Heart right ventricle (tissue), 16 donors: ENCODE measurements at regions of chr7 and their contacts with region 1.

Region 1: DNA sequence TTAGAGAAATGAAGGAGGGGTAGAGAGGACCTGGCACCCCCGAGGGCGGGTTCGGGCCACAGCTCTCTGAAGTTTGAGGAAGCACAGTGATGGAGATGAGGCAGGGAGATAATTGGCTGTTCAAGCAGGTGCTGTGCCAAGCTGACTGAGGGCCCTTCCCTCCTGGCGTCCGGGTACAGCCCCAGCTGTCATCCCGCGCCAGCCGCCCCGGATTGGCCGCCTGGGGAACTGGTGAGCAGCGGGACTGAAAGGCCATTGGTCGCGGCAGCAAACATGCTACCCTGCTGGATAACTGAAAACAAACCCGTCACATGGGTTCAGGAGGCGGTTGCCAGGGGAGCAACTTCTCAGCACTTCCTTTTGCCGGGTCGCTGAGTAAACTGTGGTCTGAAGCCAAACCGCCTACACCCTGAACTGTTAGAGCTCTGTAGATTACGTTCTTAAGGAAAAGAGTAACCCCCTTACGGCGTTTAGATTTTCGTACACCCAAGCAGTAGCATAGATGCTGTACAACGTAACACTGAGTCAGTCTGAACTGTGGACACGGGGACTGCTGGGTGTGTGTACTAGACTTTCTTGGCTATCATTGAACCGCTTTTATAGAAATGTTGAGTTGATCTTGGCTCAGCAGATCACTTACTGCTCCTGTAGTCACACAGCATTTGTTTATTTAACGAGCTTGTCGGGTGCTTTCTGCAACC is 1.3 kb downstream of the INSIG1 start:
- DNase-seq: peak; percentile 92 to 94
- ATAC-seq: peak; percentile 72 to 93 (median 90)
- H3K4me3 ChIP-seq: peak overlapping the region; percentile 75 to 97 (median 91)
- H3K27ac ChIP-seq: peak overlapping the region; percentile 48 to 96 (median 94)
- H3K4me1 ChIP-seq: peaks cover 12 to 52% (median 36%) of the 10 kb centered on the region in 9 donors
- H3K27me3 ChIP-seq: no peaks in the 10 kb centered on the region
- CTCF ChIP-seq: peak in 3 of 9 donors; percentile 12 to 26 (median 23)

Region 2: DNA sequence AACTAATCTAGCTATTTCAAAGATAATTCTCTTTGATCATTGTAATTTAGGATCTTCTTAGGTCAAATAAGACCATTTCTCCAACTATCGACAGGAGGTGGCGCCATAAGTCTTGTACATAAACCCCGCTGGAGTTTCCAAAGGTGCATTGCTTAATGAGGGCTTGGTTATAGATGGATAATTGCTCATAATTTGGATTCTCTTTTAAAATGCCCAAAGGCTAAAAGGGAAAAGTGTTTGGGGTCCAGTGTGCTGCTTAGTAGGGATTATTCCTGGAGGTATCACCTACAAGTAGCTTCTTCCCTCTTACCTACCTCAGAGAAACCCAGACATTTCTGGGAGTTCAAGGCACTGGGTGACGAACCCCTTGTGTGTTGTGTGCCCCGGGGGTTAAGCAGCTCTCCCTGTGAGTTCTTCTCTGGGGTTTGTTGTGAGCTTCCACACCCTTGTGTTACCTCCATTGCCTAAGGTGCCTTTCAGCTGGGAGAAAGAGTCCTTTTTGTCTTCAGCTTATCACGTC is 371.3 kb before region 1 on chr7:
- intact Hi-C with region 1: loop called in 2 of 10 experiments (anchors 5 kb)
- DNase-seq: peak in 1 of 2 donors; percentile 84
- ATAC-seq: peak; percentile 60 to 92 (median 84)
- H3K4me3 ChIP-seq: peak overlapping the region; percentile 42 to 76 (median 64)
- H3K27ac ChIP-seq: peak overlapping the region in 9 of 10 donors; percentile 76 to 92 (median 82)
- H3K4me1 ChIP-seq: peaks cover 0 to 23% (median 11%) of the 10 kb centered on the region in 9 donors
- H3K27me3 ChIP-seq: peaks cover 0 to 1% (median 0%) of the 10 kb centered on the region in 7 donors
- CTCF ChIP-seq: peak; percentile 28 to 83 (median 72)

Region 3: GRCh38 chr7:155003376-155004214 is 295.4 kb before region 1 on chr7:
- intact Hi-C with region 1: loop called in 5 of 10 experiments (anchors 5 kb)
- DNase-seq: peak; percentile 72 to 80
- ATAC-seq: peak; percentile 97 to 99 (median 98)
- H3K4me3 ChIP-seq: peak overlapping the region; percentile 72 to 100 (median 95)
- H3K27ac ChIP-seq: peak overlapping the region; percentile 76 to 97 (median 93)
- H3K4me1 ChIP-seq: peaks cover 2 to 28% (median 16%) of the 10 kb centered on the region in 9 donors
- H3K27me3 ChIP-seq: no peaks in the 10 kb centered on the region
- CTCF ChIP-seq: no peak

Region 4: GRCh38 chr7:155190688-155191087 is 108.3 kb before region 1 on chr7:
- intact Hi-C with region 1: loop called in 2 of 10 experiments (anchors 5 to 10 kb)
- DNase-seq: peak; percentile 35 to 59
- ATAC-seq: peak in 7 of 8 donors; percentile 63 to 81 (median 67)
- H3K4me3 ChIP-seq: peak overlapping the region in 3 of 10 donors; percentile 5 to 18 (median 15)
- H3K27ac ChIP-seq: no peak overlapping the region
- H3K4me1 ChIP-seq: peaks cover 0 to 4% (median 2%) of the 10 kb centered on the region in 9 donors
- H3K27me3 ChIP-seq: peaks cover 0 to 42% (median 13%) of the 10 kb centered on the region in 7 donors
- CTCF ChIP-seq: peak; percentile 77 to 88 (median 83)

Region 5: DNA sequence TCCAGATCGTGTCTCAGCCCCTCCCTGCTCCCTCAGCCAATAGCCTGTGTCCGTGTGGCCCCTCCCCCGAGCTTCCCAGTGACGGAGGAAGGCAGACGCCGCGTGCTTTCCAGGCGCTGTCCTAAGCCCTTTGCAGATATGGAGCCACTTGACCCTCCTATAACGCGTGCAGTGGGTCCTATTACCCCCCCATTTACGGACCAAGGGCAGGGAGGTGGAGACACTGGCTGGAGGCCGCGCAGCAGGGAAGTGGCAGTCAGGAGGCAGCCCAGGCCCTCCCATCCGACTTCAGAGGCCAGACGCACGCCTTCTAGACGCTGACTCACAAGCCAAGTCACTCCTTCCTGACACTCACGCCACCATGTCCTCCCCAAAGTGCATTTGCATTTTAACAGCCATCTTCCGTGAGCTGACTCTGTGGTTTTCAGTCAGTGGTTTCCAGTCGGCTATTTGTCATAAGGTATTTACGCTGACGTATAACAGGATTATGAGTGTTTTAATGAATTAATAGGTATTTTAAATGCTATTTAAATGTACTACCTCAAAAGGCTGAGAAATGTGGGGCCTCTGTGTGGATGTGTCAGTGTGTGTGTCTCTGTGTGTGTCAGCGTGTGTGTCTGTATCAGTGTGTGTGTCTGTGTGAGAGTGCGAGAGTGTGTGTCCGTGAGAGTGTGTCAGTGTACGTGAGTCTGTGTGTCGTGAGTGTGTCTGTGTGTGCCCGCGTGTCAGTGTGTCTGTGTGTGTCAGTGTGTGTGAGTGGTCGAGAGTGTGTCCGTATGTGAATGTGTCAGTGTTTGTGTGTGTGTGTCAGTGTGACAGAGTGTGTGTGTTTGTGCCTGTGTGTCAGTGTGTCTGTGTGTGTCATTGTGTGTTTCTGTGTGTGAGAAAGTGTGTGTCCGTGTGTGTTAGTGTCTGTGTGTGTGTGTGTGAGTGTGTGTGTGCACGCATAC is 93.3 kb before region 1 on chr7:
- intact Hi-C with region 1: loop called in 7 of 10 experiments (anchors 2 to 5 kb)
- DNase-seq: peak; percentile 81 to 86
- ATAC-seq: peak; percentile 84 to 91 (median 88)
- H3K4me3 ChIP-seq: peak overlapping the region in 9 of 10 donors; percentile 12 to 54 (median 39)
- H3K27ac ChIP-seq: peak overlapping the region; percentile 59 to 94 (median 84)
- H3K4me1 ChIP-seq: peaks cover 0 to 28% (median 11%) of the 10 kb centered on the region in 9 donors
- H3K27me3 ChIP-seq: peaks cover 0 to 25% (median 3%) of the 10 kb centered on the region in 7 donors
- CTCF ChIP-seq: peak in 2 of 9 donors; percentile 9 to 18

Region 6: DNA sequence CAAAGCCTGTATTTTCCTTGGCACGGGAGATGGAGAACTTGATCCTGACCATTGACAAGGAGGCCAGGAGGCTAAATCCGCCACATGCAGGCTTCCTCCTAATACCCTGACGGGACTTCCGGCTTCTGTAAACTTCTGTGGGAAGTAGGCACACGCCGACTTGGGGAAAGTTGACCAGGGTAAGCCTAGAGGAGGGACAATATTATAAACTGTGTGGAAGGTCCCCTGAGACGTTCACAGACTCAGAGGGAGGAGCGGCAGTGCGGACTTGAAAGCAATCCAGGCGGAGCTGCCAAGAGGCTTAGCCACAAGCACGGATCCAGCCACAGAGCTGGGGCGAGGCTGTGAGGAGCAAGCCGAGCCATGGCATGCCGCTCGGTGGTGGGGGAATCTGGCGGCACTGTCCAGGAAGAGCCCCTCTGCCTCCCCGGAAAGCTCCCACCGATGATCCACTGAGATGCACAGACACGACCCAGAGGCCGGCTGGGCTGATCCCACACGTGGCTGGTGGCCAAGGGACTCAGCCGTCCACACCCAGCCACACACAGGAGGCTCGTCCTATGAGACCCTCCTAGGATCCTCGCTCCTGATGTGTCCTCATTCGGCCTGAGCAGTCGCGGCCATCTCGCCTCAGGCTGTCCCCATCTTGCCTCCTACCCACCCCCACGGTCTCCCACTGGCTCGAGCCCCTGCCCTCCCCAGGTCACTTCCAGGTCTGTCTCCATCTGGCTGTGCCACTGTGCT is 41.3 kb before region 1 on chr7:
- intact Hi-C with region 1: loop called in 5 of 10 experiments (anchors 1 to 5 kb)
- DNase-seq: peak; percentile 82 to 83
- ATAC-seq: peak; percentile 79 to 94 (median 90)
- H3K4me3 ChIP-seq: peak overlapping the region in 6 of 10 donors; percentile 9 to 33 (median 21)
- H3K27ac ChIP-seq: peak overlapping the region; percentile 51 to 85 (median 72)
- H3K4me1 ChIP-seq: peaks cover 7 to 24% (median 15%) of the 10 kb centered on the region in 9 donors
- H3K27me3 ChIP-seq: peaks cover 0 to 6% (median 0%) of the 10 kb centered on the region in 7 donors
- CTCF ChIP-seq: no peak

Region 7: DNA sequence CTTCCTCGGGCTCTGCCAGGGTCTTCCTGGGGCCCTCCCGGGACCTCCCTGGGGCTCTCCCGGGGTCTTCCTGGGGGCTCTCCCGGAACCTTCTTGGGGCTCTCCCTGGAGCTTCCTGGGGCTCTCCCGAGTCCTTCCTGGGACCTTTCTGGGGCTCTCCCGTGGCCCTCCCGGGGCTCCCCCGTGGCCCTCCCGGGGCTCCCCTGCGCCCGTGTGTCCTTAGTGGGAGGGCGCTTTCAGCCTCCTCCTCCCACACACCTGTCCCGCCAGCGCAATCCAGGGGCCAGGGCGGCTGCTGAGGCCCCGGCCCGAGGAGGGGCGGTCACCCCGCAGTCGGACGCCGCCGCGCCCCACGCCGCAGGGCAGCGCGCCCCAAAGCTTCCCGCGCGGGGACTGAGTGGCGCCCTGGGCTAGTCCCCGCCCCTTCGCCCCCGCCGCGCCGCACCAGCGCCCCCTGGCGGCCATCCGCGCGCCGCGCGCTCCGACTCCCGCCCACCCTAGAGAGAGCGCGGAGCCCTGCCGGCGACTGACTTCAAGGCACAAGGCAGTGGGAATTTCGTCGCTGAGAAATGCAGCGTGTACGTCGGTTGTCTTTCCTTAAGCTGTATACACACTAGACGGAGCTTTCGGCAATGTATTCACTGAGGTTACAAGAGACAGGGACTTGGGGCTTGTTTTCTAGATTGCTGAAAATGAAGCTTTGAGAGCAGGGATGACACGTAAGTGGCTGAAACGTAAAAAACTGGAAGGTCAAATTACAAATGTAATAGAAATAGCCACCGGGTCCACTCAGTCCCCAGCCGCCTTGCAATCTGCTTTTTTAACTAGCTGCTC is 45.8 kb after region 1 on chr7:
- intact Hi-C with region 1: loop called in 2 of 10 experiments (anchors 2 to 5 kb)
- DNase-seq: peak; percentile 65 to 84
- ATAC-seq: peak; percentile 88 to 97 (median 96)
- H3K4me3 ChIP-seq: peak overlapping the region in 9 of 10 donors; percentile 24 to 50 (median 40)
- H3K27ac ChIP-seq: peak overlapping the region in 1 of 10 donors; percentile 15
- H3K4me1 ChIP-seq: peaks cover 0 to 11% (median 8%) of the 10 kb centered on the region in 9 donors
- H3K27me3 ChIP-seq: peaks cover 0 to 30% (median 17%) of the 10 kb centered on the region in 7 donors
- CTCF ChIP-seq: peak; percentile 78 to 95 (median 87)

Region 8: GRCh38 chr7:155660059-155660757 is 361.2 kb after region 1 on chr7:
- intact Hi-C with region 1: no loop called
- DNase-seq: no peak
- ATAC-seq: no peak
- H3K4me3 ChIP-seq: no peak overlapping the region
- H3K27ac ChIP-seq: no peak overlapping the region
- H3K4me1 ChIP-seq: peaks cover 0 to 50% (median 21%) of the 10 kb centered on the region in 9 donors
- H3K27me3 ChIP-seq: no peaks in the 10 kb centered on the region
- CTCF ChIP-seq: no peak

Region 9: DNA sequence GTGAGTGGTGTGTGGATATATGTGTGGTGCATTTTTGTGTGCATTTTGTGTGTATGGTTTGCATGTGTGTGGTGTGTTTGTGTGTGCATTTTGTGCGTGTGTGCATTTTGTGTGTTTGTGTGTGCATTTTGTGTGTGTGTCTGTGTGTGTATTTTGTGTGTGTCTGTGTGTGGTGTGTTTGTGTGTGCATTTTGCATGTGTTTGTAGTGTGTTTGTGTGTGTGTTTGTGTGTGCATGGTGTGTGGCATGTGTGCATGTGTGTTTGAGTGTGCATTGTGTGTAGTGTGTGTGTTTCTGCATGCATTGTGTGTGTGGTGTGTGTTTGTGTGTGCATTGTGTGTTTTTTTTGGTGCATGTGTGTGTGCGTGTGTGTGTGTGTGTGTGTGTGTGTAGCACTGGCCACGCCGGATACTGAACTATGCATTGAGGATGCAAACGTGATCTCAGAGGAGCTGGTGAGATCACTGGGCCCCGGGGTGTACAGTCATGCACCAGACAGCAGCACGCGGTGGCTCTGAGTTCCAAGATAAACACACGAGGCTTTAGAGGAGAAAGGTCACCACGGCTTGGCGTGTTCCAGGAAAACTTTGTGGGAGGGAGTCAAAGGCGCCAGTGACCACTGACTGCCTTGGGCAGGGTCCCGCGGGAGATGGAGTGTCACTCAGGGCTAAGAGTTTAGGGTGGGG is 619.9 kb after region 1 on chr7:
- intact Hi-C with region 1: no loop called
- DNase-seq: peak; percentile 15 to 27
- ATAC-seq: peak in 7 of 8 donors; percentile 19 to 79 (median 47)
- H3K4me3 ChIP-seq: no peak overlapping the region
- H3K27ac ChIP-seq: no peak overlapping the region
- H3K4me1 ChIP-seq: no peaks in the 10 kb centered on the region
- H3K27me3 ChIP-seq: peaks cover 0 to 15% (median 5%) of the 10 kb centered on the region in 7 donors
- CTCF ChIP-seq: no peak